ENCODE measurements at regions of chr1 and their contacts with region 1.

Region 1: GRCh38 chr1:110780600-110781484 is 92.1 kb upstream of the CD53 start:
- DNase-seq: peak; percentile 44 to 81 (median 72)
- H3K4me3 ChIP-seq: no peak overlapping the region
- H3K4me3 Mint-ChIP-seq: peak overlapping the region in 4 of 7 donors; percentile 12 to 38 (median 22)
- H3K27ac ChIP-seq: no peak overlapping the region
- H3K27ac Mint-ChIP-seq: peak overlapping the region in 3 of 8 donors; percentile 17 to 45 (median 32)
- H3K4me1 ChIP-seq: peaks cover 39% of the 10 kb centered on the region
- H3K4me1 Mint-ChIP-seq: peaks cover 36 to 41% (median 39%) of the 10 kb centered on the region in 3 donors
- H3K27me3 ChIP-seq: no peaks in the 10 kb centered on the region
- H3K27me3 Mint-ChIP-seq: peaks cover 4% of the 10 kb centered on the region in 2 donors

Region 2: DNA sequence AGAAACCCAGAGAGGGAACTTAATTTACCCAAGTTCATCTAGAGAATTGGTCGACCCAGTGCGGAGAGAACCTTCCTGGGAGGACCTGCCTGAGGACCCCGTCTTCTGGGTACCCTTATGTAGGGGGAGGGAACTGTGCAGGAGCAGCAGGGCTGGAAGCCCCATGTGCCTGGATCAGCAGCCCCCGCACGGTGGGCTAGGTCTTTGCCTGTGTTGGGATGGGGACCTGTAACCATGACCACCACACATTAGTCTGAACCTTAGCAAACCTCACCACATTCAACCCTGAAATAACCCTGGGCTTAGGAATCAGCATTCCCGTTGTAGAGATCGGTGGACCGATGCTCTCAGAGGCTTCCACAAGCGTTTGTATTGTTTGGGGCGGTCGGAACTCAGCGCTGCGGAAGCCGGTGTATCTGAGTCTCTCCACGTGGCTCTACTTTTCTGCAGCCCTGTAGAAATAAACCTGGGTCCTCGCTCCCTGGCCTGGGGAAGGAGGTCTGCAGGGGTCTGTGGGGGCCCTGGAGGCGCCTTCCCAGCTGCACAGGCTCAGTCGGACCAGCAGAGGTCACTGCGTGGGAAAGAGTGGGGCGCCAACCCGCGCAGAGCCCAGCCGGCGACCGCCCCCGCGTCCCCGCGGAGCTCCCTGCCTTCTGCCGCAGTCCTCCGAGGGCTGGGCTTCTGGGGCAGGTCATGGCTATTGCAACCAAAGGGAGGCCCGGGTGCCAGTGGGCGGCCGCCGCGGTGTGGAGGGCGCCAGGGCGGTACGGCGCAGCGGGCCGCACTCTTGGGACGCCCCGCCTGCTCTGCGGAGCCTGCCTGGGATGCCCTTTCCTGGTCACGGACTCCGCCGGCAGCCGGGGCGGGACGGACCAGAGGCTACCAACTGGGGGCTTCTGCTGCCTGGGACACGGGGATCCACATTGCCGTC is 225.7 kb before region 1 on chr1:
- CTCF ChIA-PET with region 1: interaction called, 20 read pairs
- POLR2A ChIA-PET with region 1: no interaction called
- DNase-seq: peak; percentile 23 to 61 (median 41)
- H3K4me3 ChIP-seq: no peak overlapping the region
- H3K4me3 Mint-ChIP-seq: peak overlapping the region in 5 of 7 donors; percentile 15 to 57 (median 44)
- H3K27ac ChIP-seq: no peak overlapping the region
- H3K27ac Mint-ChIP-seq: no peak overlapping the region
- H3K4me1 ChIP-seq: no peaks in the 10 kb centered on the region
- H3K4me1 Mint-ChIP-seq: peaks cover 0 to 4% (median 2%) of the 10 kb centered on the region in 3 donors
- H3K27me3 ChIP-seq: peaks cover 23% of the 10 kb centered on the region
- H3K27me3 Mint-ChIP-seq: peaks cover 28 to 66% of the 10 kb centered on the region in 2 donors

Region 3: DNA sequence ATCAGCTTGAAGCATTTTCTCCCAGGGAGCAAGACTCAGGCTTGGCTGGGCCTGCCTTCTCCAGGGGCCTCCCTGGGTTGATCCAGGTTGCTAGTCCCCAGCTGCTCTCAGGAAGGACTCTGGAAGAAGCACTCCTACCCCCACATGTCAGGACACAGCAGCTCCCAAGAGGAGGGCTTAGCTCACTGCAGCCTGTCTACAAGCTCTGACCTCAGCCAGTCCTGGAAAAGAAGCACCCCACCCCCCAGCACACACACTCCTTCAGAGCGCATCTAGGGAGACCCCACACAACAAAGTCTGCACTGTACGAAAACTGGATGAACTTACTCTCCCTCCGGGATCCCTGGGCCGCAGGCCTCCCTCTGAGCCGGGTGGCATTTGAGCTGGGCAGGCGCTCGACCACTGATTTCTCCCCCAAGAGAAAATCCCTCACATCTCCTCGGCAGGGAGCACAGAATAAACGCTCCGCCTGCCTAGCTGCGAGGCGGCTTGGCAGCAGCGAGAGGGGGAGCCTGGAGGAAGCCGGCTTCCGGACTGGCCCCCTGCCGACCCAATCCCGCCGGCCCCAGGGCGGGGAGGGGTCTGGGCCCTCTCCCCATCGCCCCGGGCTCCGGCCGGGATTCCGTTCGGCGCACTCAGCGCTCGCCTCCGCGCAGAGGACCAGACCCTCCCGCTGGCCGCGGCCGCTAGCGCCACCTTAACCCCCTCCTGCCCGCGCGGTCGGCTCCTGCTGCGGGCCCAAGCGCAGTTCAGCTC is 174.8 kb before region 1 on chr1 and contains the start of gene KCNA2:
- CTCF ChIA-PET with region 1: interaction called, 10 read pairs
- POLR2A ChIA-PET with region 1: no interaction called
- DNase-seq: no peak
- H3K4me3 ChIP-seq: peak within 1 kb of the TSS; percentile 55
- H3K4me3 Mint-ChIP-seq: peak within 1 kb of the TSS; percentile 73 to 90 (median 83)
- H3K27ac ChIP-seq: no peak within 1 kb of the TSS
- H3K27ac Mint-ChIP-seq: peak within 1 kb of the TSS in 1 of 8 donors; percentile 40
- H3K4me1 ChIP-seq: peaks cover 13% of the 10 kb centered on the region
- H3K4me1 Mint-ChIP-seq: peaks cover 10 to 30% (median 13%) of the 10 kb centered on the region in 3 donors
- H3K27me3 ChIP-seq: peaks cover 40% of the 10 kb centered on the region
- H3K27me3 Mint-ChIP-seq: peaks cover 19 to 59% of the 10 kb centered on the region in 2 donors
- total RNA-seq, gene KCNA2: 0.24 to 0.35 TPM

Region 4: GRCh38 chr1:110798691-110799256 is 17.9 kb after region 1 on chr1:
- CTCF ChIA-PET with region 1: interaction called, 14 read pairs
- POLR2A ChIA-PET with region 1: no interaction called
- DNase-seq: no peak
- H3K4me3 ChIP-seq: no peak overlapping the region
- H3K4me3 Mint-ChIP-seq: no peak overlapping the region
- H3K27ac ChIP-seq: no peak overlapping the region
- H3K27ac Mint-ChIP-seq: no peak overlapping the region
- H3K4me1 ChIP-seq: no peaks in the 10 kb centered on the region
- H3K4me1 Mint-ChIP-seq: peaks cover 0 to 3% (median 2%) of the 10 kb centered on the region in 3 donors
- H3K27me3 ChIP-seq: no peaks in the 10 kb centered on the region
- H3K27me3 Mint-ChIP-seq: peaks cover 0 to 5% of the 10 kb centered on the region in 2 donors

Region 5: GRCh38 chr1:110986407-110986891 is 205.6 kb after region 1 on chr1:
- CTCF ChIA-PET with region 1: interaction called, 26 read pairs
- POLR2A ChIA-PET with region 1: no interaction called
- DNase-seq: no peak
- H3K4me3 ChIP-seq: no peak overlapping the region
- H3K4me3 Mint-ChIP-seq: no peak overlapping the region
- H3K27ac ChIP-seq: no peak overlapping the region
- H3K27ac Mint-ChIP-seq: no peak overlapping the region
- H3K4me1 ChIP-seq: peaks cover 16% of the 10 kb centered on the region
- H3K4me1 Mint-ChIP-seq: peaks cover 21 to 28% (median 25%) of the 10 kb centered on the region in 3 donors
- H3K27me3 ChIP-seq: no peaks in the 10 kb centered on the region
- H3K27me3 Mint-ChIP-seq: peaks cover 3 to 4% of the 10 kb centered on the region in 2 donors